Activated naive CD4-positive, alpha-beta T cell treated with anti-CD3 and anti-CD28 coated beads, Interleukin-2, amount 10 ng/mL, durations not matched to agents 7 days and 5 days (primary cell): ENCODE measurements at regions of chrX and their contacts with region 1.

Region 1: GRCh38 chrX:19332983-19333382 is 10.7 kb upstream of the PDHA1 start:
- DNase-seq: no peak
- H3K4me3 Mint-ChIP-seq: no peak overlapping the region
- H3K27ac Mint-ChIP-seq: no peak overlapping the region
- H3K4me1 Mint-ChIP-seq: peaks cover 7% of the 10 kb centered on the region
- H3K27me3 Mint-ChIP-seq: peaks cover 8% of the 10 kb centered on the region

Region 2: DNA sequence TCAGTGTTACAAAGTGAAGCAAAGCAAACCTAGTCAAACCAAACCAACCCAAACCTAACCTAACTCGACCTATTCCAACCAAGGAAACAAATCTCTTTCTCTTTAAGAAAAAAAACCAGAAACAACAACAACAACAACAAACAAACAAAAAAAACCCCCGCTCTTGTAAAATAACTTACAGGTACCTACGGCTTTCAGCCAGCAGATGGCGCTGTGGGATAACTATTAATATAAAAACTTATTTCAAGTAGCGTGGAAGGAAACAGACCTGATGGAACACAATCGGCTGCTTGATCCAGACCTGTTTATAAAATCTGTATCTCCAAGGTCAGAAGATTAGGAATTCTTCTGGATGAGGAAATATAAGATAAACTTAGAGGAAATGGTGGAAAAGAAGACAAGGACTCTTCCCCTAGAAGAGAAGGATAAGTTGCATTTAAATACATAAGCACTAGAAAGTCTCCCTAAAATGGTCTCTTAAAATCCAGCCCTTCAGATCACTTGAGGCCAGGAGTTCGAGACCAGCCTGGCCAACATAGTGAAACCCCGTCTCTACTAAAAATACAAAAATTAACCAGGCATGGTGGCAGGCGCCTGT is 941.9 kb before region 1 on chrX:
- CTCF ChIA-PET with region 1: interaction called, 12 read pairs
- DNase-seq: peak; percentile 68
- H3K4me3 Mint-ChIP-seq: no peak overlapping the region
- H3K27ac Mint-ChIP-seq: no peak overlapping the region
- H3K4me1 Mint-ChIP-seq: no peaks in the 10 kb centered on the region
- H3K27me3 Mint-ChIP-seq: no peaks in the 10 kb centered on the region

Region 3: GRCh38 chrX:19225924-19226323 is 107.1 kb before region 1 on chrX:
- CTCF ChIA-PET with region 1: no interaction called
- DNase-seq: no peak
- H3K4me3 Mint-ChIP-seq: no peak overlapping the region
- H3K27ac Mint-ChIP-seq: no peak overlapping the region
- H3K4me1 Mint-ChIP-seq: no peaks in the 10 kb centered on the region
- H3K27me3 Mint-ChIP-seq: peaks cover 5% of the 10 kb centered on the region